Heart right ventricle (tissue), 16 donors: ENCODE measurements at regions of chr1 and their contacts with region 1.

Region 1: DNA sequence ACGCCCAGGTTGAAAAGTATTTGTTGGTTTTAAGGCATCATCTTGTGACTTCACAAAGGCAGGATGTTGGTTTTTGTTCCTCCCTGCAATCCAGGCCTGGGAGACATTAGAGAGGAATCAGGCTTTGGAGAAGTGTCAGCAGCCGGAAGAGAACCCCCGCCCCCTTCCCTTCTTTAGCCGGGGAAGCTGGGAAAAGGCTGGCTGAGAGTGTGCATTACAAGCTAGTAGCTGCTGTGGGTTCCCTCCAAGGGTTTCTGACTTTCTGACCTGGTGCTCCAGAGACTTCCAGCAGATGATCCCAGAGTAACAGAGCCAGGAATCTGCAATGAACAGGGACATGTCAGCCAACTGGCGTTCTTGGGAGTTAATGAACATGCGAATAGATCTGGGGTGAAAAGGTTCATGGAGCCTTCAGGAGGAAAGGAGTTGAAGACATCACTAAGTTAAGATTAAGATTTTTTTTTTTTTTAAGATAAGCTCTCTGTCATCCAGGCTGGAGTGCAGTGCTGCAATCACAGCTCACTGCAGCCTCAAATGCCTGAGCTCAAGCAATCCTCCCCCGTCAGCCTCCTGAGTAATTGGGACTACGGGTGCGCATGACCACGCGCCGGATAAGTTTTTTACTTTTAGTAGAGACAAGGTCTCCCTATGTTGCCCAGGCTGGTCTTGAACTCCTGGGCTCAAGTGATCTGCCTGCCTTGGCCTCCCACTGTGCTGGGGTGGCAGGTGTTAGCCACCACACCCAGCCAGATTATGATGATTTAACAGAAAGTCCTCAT is 7.5 kb downstream of the DISP3 start:
- DNase-seq: no peak
- ATAC-seq: no peak
- H3K4me3 ChIP-seq: no peak overlapping the region
- H3K27ac ChIP-seq: no peak overlapping the region
- H3K4me1 ChIP-seq: peaks cover 0 to 12% (median 0%) of the 10 kb centered on the region in 9 donors
- H3K27me3 ChIP-seq: peaks cover 5 to 65% (median 33%) of the 10 kb centered on the region in 7 donors
- CTCF ChIP-seq: no peak

Region 2: DNA sequence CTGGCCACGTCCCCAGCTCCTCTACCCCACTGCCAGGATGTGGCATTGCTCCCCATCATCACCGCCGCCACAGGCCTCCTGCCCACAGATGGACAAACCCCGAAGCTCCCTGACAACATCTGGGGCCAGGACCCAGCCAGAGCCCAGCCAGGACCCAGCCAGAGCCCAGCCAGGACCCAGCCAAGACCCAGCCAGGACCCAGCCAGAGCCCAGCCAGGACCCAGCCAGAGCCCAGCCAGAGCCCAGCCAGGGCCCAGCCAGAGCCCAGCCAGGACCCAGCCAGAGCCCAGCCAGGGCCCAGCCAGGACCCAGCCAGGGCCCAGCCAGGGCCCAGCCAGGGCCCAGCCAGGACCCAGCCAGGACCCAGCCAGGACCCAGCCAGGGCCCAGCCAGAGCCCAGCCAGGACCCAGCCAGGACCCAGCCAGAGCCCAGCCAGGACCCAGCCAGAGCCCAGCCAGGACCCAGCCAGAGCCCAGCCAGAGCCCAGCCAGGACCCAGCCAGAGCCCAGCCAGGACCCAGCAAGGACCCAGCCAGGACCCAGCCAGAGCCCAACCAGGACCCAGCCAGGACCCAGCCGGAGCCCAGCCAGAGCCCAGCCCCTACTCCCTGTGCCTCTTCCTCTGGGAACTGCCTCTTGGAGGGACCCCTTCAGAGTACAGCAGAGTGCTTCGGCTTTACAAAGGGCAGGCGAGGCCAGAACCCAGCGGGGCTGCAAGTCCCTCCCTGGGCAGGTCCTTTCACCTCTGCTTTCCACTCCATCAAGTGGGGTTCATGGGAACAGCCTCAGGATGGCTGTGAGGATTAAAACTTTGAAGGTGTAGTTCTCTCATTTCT is 36.2 kb after region 1 on chr1:
- intact Hi-C with region 1: loop called in 1 of 10 experiments (anchors 1 kb)
- DNase-seq: no peak
- ATAC-seq: no peak
- H3K4me3 ChIP-seq: no peak overlapping the region
- H3K27ac ChIP-seq: no peak overlapping the region
- H3K4me1 ChIP-seq: no peaks in the 10 kb centered on the region
- H3K27me3 ChIP-seq: peaks cover 0 to 10% (median 0%) of the 10 kb centered on the region in 7 donors
- CTCF ChIP-seq: no peak

Region 3: DNA sequence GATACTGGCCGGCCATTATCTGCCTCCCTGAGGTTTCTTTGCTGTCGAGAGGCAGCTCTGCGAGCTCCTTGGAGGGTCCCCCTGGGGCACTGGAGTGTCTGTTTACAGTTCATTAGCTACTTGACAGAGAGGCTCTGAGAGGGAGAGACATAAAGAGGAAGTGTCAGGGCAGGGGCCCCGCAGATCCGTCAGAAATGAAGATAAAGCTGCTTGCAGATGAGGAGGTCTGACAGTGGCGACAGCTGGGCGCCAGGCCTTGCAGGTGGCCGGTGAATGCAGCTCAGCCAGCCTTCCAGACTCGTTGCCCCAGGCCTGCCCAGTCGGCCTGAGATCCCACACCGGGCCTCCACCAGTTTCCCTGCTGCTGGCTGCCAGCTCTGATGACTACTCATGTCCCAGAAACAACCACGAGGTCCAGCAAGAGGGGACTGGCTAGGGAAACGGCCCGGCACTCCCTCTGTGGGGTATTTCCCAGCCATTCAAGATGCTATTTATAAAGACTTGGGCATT is 77.2 kb after region 1 on chr1:
- intact Hi-C with region 1: no loop called
- DNase-seq: no peak
- ATAC-seq: peak in 1 of 8 donors; percentile 18
- H3K4me3 ChIP-seq: no peak overlapping the region
- H3K27ac ChIP-seq: no peak overlapping the region
- H3K4me1 ChIP-seq: no peaks in the 10 kb centered on the region
- H3K27me3 ChIP-seq: peaks cover 7 to 88% (median 63%) of the 10 kb centered on the region in 7 donors
- CTCF ChIP-seq: no peak

Region 4: DNA sequence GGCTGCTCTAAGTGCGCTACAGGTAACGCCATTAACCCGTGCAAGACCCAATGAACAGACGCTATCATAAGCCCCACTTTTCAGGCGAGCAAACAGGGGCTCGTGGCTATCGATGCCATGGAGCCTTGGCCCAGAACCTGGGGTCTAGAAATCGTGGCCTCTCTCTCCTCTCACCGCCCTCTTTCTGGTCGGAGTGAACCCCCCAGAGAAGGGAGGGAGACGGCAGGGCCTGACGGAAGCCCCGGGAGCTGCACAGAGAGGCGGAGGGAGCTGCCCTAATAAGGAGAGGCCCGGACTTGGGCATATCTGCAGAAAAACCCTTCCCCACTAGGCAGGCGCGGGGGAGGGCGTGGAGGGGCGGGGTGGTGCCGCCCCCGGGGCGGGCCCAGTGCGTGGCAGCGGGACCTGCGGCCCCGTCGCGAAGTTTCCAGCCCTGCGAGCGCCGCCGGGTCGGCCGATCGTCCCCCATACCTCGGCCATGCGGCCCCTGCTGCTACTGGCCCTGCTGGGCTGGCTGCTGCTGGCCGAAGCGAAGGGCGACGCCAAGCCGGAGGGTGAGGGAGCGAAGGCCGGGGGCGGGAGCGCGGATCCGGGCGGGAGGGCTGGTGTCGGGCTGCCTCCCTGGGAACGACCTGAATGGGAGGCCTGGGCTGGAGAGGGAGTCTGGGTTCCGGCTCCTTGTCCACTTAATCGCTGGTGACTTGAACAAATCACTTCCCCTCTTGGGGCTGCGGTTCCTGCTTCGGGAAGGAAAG is 448.1 kb after region 1 on chr1 and contains the start of gene PLOD1:
- intact Hi-C with region 1: no loop called
- DNase-seq: peak; percentile 92 to 94
- ATAC-seq: peak; percentile 88 to 95 (median 90)
- H3K4me3 ChIP-seq: peak within 1 kb of the TSS; percentile 47 to 87 (median 69)
- H3K27ac ChIP-seq: peak within 1 kb of the TSS; percentile 59 to 94 (median 90)
- H3K4me1 ChIP-seq: peaks cover 21 to 82% (median 75%) of the 10 kb centered on the region in 9 donors
- H3K27me3 ChIP-seq: no peaks in the 10 kb centered on the region
- CTCF ChIP-seq: no peak
- total RNA-seq, gene PLOD1: 27.3 to 95.3 (median 44.4) TPM